MCF 10A (cell line): ENCODE measurements at regions of chr5 and their contacts with region 1.

Region 1: DNA sequence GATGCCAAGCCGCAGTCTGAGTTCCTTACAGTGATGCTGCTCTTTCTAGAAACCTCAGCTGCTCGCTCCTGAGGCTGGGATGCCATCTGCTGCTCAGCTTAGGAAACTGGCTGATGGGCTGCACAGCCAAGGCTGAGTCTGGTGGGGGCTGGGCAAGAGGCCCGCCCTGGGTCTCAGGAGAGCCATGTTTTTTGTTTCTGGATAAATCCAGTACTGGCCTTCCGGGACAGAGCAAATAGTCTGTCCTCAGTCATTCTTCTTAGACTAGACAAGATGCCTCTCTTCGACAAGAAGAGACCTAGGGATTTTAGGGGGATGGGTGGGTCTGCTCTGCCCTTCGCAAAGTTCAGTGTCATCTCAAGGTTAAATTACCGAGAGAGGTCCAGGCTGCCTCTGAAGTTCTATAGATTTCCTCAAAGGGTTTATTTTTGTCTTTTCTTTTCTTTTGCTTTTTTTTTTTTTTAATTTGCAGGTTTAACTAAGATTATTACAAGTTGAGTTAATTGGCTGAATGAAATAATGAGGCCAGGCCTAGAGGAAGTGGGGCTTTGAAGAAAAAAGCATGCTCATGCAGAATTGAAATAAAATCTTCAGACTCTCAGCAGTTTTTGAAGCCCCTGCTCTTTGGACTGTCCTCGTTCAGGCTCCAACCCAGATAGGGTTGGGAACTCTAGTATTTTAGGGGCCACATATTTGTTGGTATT is 30.6 kb upstream of the MATR3 start:
- DNase-seq: peak; percentile 94
- H3K4me3 Mint-ChIP-seq: no peak overlapping the region
- H3K27ac Mint-ChIP-seq: no peak overlapping the region
- H3K4me1 Mint-ChIP-seq: peaks cover 11% of the 10 kb centered on the region
- H3K27me3 Mint-ChIP-seq: no peaks in the 10 kb centered on the region
- CTCF ChIP-seq: peak; percentile 99

Region 2: GRCh38 chr5:138641547-138642298 is 621.2 kb before region 1 on chr5:
- CTCF ChIA-PET with region 1: interaction called, 6 read pairs
- POLR2A ChIA-PET with region 1: interaction called, 4 read pairs
- intact Hi-C with region 1: loop called (anchors 1 kb)
- DNase-seq: peak; percentile 91
- H3K4me3 Mint-ChIP-seq: no peak overlapping the region
- H3K27ac Mint-ChIP-seq: no peak overlapping the region
- H3K4me1 Mint-ChIP-seq: peaks cover 4% of the 10 kb centered on the region
- H3K27me3 Mint-ChIP-seq: no peaks in the 10 kb centered on the region
- CTCF ChIP-seq: peak; percentile 97

Region 3: GRCh38 chr5:138789771-138790242 is 473.1 kb before region 1 on chr5:
- CTCF ChIA-PET with region 1: interaction called, 4 read pairs
- POLR2A ChIA-PET with region 1: no interaction called
- intact Hi-C with region 1: loop called (anchors 1 kb)
- DNase-seq: peak; percentile 71
- H3K4me3 Mint-ChIP-seq: no peak overlapping the region
- H3K27ac Mint-ChIP-seq: no peak overlapping the region
- H3K4me1 Mint-ChIP-seq: peaks cover 42% of the 10 kb centered on the region
- H3K27me3 Mint-ChIP-seq: no peaks in the 10 kb centered on the region
- CTCF ChIP-seq: peak; percentile 25

Region 4: GRCh38 chr5:138824924-138825863 is 437.7 kb before region 1 on chr5:
- CTCF ChIA-PET with region 1: interaction called, 41 read pairs
- POLR2A ChIA-PET with region 1: no interaction called
- intact Hi-C with region 1: loop called (anchors 1 kb)
- DNase-seq: peak; percentile 24
- H3K4me3 Mint-ChIP-seq: no peak overlapping the region
- H3K27ac Mint-ChIP-seq: no peak overlapping the region
- H3K4me1 Mint-ChIP-seq: peaks cover 7% of the 10 kb centered on the region
- H3K27me3 Mint-ChIP-seq: no peaks in the 10 kb centered on the region
- CTCF ChIP-seq: peak; percentile 40

Region 5: GRCh38 chr5:139221756-139222155 is 41.1 kb before region 1 on chr5:
- CTCF ChIA-PET with region 1: no interaction called
- POLR2A ChIA-PET with region 1: no interaction called
- intact Hi-C with region 1: no loop called
- DNase-seq: no peak
- H3K4me3 Mint-ChIP-seq: no peak overlapping the region
- H3K27ac Mint-ChIP-seq: no peak overlapping the region
- H3K4me1 Mint-ChIP-seq: peaks cover 5% of the 10 kb centered on the region
- H3K27me3 Mint-ChIP-seq: no peaks in the 10 kb centered on the region
- CTCF ChIP-seq: no peak

Region 6: DNA sequence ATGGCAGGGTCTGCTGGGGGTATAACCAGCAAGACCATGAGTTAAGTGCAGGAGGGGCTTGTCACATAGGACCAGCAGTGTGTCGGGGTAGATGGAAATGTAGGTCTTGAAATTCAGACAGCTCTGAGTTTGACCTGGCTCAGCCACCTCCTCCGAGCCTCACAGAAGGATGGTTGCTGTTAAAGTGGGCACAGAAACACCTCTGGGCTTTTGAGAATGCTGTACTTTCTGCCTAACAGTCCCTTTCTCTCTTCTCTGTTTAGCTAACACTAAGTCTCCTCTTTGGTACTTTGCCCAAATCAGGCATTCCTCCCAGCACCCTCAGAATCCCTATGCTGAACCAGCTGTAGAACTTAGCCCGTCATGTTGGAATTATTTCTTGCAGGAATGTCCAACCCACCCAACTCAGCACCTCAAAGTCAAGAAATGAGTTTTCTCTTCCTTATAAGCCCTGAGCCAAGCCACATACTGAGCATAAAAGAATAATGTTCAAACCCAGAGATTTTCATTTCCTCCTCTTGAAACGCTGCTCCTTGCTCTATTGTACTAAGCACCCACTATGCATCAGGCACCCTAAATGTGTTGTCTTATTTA is 11.1 kb before region 1 on chr5:
- CTCF ChIA-PET with region 1: interaction called, 12 read pairs
- POLR2A ChIA-PET with region 1: interaction called, 3 read pairs
- intact Hi-C with region 1: no loop called
- DNase-seq: no peak
- H3K4me3 Mint-ChIP-seq: no peak overlapping the region
- H3K27ac Mint-ChIP-seq: no peak overlapping the region
- H3K4me1 Mint-ChIP-seq: no peaks in the 10 kb centered on the region
- H3K27me3 Mint-ChIP-seq: no peaks in the 10 kb centered on the region
- CTCF ChIP-seq: no peak

Region 7: GRCh38 chr5:139385061-139386049 is 122.5 kb after region 1 on chr5:
- CTCF ChIA-PET with region 1: no interaction called
- POLR2A ChIA-PET with region 1: no interaction called
- intact Hi-C with region 1: no loop called
- DNase-seq: no peak
- H3K4me3 Mint-ChIP-seq: no peak overlapping the region
- H3K27ac Mint-ChIP-seq: no peak overlapping the region
- H3K4me1 Mint-ChIP-seq: peaks cover 20% of the 10 kb centered on the region
- H3K27me3 Mint-ChIP-seq: no peaks in the 10 kb centered on the region
- CTCF ChIP-seq: no peak